ENCODE measurements at regions of chr11 and their contacts with region 1.

Region 1: GRCh38 chr11:72483412-72484186 is 49.3 kb upstream of the CLPB start:
- DNase-seq: peak; percentile 52
- H3K4me3 Mint-ChIP-seq: no peak overlapping the region
- H3K27ac Mint-ChIP-seq: peak overlapping the region; percentile 26
- H3K4me1 Mint-ChIP-seq: peaks cover 7% of the 10 kb centered on the region
- H3K27me3 Mint-ChIP-seq: no peaks in the 10 kb centered on the region

Region 2: GRCh38 chr11:72250661-72251465 is 232.7 kb before region 1 on chr11:
- CTCF ChIA-PET with region 1: no interaction called
- intact Hi-C with region 1: no loop called
- DNase-seq: no peak
- H3K4me3 Mint-ChIP-seq: no peak overlapping the region
- H3K27ac Mint-ChIP-seq: no peak overlapping the region
- H3K4me1 Mint-ChIP-seq: no peaks in the 10 kb centered on the region
- H3K27me3 Mint-ChIP-seq: peaks cover 4% of the 10 kb centered on the region

Region 3: DNA sequence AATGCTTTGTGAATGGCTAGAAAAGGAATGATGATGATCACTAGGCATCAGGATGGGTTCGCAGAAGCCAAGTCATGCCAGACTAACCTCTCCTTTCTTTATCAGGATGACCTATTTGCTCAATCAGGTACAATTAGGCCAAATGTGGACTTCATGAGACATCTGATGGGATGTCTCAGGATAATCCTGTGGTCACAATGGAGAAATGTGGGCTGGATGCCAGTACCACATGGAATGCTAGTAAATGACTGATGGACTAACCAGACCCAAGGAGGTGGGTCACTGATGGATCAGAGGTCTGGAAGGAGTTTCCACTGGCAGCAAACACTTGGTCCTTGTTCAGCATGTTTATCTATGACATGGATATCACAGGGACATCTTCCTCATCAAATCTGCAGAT is 144.9 kb before region 1 on chr11:
- CTCF ChIA-PET with region 1: no interaction called
- intact Hi-C with region 1: no loop called
- DNase-seq: no peak
- H3K4me3 Mint-ChIP-seq: no peak overlapping the region
- H3K27ac Mint-ChIP-seq: no peak overlapping the region
- H3K4me1 Mint-ChIP-seq: peaks cover 21% of the 10 kb centered on the region
- H3K27me3 Mint-ChIP-seq: no peaks in the 10 kb centered on the region

Region 4: DNA sequence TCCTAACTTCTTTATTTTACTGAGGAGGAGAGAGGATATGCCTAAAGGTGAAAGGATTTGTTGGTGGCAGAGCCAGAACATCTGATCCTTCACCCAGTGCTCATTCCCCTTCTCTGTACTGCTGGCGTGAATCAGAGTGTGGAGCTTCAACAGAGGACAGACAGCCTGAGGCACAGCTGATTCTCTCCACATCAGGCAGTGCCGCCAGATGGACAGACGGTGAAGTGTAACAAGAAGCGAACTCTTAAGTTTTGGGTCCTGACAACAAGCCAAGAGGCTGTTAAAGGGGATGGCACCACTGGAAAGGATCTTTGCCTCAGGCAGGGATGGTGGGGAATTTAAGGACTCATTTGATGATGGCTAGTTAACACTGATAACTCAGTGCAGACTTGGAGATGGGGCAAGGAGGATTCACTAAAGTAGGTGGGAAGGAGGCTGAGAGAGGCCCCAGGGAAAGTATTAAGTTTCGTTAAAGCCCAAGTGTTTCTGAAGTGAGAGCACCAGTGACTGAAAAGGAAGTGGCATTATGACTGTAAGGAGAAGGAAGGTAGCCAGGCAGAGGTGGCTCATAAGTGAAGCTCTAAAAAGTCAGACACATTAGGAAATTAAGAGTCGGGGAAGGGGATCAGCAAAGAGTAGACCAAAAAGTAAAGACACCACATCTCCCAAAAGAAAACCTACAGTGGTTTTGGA is 130.6 kb before region 1 on chr11:
- CTCF ChIA-PET with region 1: no interaction called
- intact Hi-C with region 1: no loop called
- DNase-seq: peak; percentile 45
- H3K4me3 Mint-ChIP-seq: no peak overlapping the region
- H3K27ac Mint-ChIP-seq: no peak overlapping the region
- H3K4me1 Mint-ChIP-seq: no peaks in the 10 kb centered on the region
- H3K27me3 Mint-ChIP-seq: no peaks in the 10 kb centered on the region

Region 5: DNA sequence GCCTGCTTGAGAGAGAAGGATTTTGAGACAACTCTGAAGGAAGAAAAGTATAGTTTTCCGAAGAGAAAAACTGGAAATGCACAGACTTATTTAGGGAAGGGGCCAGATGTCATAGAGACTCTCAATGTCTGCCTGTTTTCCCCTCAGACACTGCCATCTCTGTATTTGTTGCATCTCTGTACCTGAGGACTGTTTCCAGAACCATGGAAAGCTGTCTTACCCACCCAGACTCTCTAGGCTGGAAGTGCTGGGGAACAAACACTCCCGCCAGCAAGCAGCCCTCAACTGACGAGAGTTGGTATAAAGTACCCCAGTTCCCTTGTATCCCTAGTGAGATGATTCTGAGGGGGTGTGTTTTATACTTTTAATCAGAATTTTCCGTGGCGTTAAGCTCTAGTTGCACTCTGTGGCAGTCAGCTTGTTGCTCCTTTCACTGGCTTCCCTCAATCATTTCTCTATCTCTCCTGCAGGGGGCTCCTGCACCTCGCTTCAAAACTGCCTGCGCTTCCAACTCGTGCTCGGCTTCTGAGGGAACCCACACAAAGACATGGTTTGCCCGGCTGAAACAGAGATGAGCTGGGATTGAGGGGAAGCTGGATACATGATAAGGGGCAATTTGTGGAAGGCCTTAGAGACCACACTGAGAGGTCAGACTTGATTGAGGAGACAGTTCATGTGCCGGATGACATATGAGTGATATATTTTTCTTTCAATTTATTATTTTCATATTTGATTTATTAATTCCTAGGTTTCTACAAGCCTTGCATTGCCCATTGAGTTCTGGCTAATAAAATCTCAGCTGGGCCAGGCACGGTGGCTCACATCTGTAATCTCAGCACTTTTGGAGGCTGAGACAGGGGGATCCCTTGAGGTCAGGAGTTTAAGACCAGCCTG is 12.3 kb before region 1 on chr11:
- CTCF ChIA-PET with region 1: interaction called, 11 read pairs
- intact Hi-C with region 1: no loop called
- DNase-seq: peak; percentile 73
- H3K4me3 Mint-ChIP-seq: peak overlapping the region; percentile 32
- H3K27ac Mint-ChIP-seq: no peak overlapping the region
- H3K4me1 Mint-ChIP-seq: peaks cover 2% of the 10 kb centered on the region
- H3K27me3 Mint-ChIP-seq: peaks cover 19% of the 10 kb centered on the region

Region 6: GRCh38 chr11:72553706-72554105 is 70.1 kb after region 1 on chr11:
- CTCF ChIA-PET with region 1: interaction called, 6 read pairs
- intact Hi-C with region 1: loop called (anchors 1 kb)
- DNase-seq: peak; percentile 54
- H3K4me3 Mint-ChIP-seq: no peak overlapping the region
- H3K27ac Mint-ChIP-seq: no peak overlapping the region
- H3K4me1 Mint-ChIP-seq: no peaks in the 10 kb centered on the region
- H3K27me3 Mint-ChIP-seq: peaks cover 5% of the 10 kb centered on the region

Region 7: GRCh38 chr11:72642884-72643511 is 159.4 kb after region 1 on chr11:
- CTCF ChIA-PET with region 1: interaction called, 4 read pairs
- intact Hi-C with region 1: loop called (anchors 1 kb)
- DNase-seq: peak; percentile 55
- H3K4me3 Mint-ChIP-seq: peak overlapping the region; percentile 56
- H3K27ac Mint-ChIP-seq: no peak overlapping the region
- H3K4me1 Mint-ChIP-seq: no peaks in the 10 kb centered on the region
- H3K27me3 Mint-ChIP-seq: no peaks in the 10 kb centered on the region

Region 8: GRCh38 chr11:72814286-72815109 is 330.9 kb after region 1 on chr11 and contains the start of gene ATG16L2:
- CTCF ChIA-PET with region 1: no interaction called
- intact Hi-C with region 1: loop called (anchors 5 kb)
- DNase-seq: peak; percentile 89
- H3K4me3 Mint-ChIP-seq: peak within 1 kb of the TSS; percentile 100
- H3K27ac Mint-ChIP-seq: peak within 1 kb of the TSS; percentile 97
- H3K4me1 Mint-ChIP-seq: peaks cover 34% of the 10 kb centered on the region
- H3K27me3 Mint-ChIP-seq: no peaks in the 10 kb centered on the region
- total RNA-seq, gene ATG16L2: 105 to 114 TPM